Activated CD4-positive, alpha-beta memory T cell treated with anti-CD3 and anti-CD28 coated beads, Interleukin-2, amount 10 ng/mL, durations not matched to agents 7 days and 5 days (primary cell): ENCODE measurements at regions of chr6 and their contacts with region 1.

Region 1: GRCh38 chr6:31665501-31666336 is at the start of gene CSNK2B:
- DNase-seq: peak; percentile 99
- H3K4me3 Mint-ChIP-seq: peak within 1 kb of the TSS; percentile 86
- H3K27ac Mint-ChIP-seq: peak within 1 kb of the TSS; percentile 89
- H3K4me1 Mint-ChIP-seq: peaks cover 74% of the 10 kb centered on the region
- H3K27me3 Mint-ChIP-seq: no peaks in the 10 kb centered on the region
- total RNA-seq, gene CSNK2B: 199 to 212 TPM

Region 2: GRCh38 chr6:31399589-31400466 is 265.9 kb before region 1 on chr6:
- CTCF ChIA-PET with region 1: interaction called, 10 read pairs
- POLR2A ChIA-PET with region 1: no interaction called
- DNase-seq: peak; percentile 68
- H3K4me3 Mint-ChIP-seq: peak overlapping the region; percentile 87
- H3K27ac Mint-ChIP-seq: peak overlapping the region; percentile 87
- H3K4me1 Mint-ChIP-seq: peaks cover 52% of the 10 kb centered on the region
- H3K27me3 Mint-ChIP-seq: peaks cover 2% of the 10 kb centered on the region

Region 3: DNA sequence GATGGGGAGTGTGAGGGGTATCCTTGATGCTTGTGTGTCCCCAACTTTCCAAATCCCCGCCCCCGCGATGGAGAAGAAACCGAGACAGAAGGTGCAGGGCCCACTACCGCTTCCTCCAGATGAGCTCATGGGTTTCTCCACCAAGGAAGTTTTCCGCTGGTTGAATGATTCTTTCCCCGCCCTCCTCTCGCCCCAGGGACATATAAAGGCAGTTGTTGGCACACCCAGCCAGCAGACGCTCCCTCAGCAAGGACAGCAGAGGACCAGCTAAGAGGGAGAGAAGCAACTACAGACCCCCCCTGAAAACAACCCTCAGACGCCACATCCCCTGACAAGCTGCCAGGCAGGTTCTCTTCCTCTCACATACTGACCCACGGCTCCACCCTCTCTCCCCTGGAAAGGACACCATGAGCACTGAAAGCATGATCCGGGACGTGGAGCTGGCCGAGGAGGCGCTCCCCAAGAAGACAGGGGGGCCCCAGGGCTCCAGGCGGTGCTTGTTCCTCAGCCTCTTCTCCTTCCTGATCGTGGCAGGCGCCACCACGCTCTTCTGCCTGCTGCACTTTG is 90.3 kb before region 1 on chr6 and contains the start of gene TNF:
- CTCF ChIA-PET with region 1: interaction called, 4 read pairs
- POLR2A ChIA-PET with region 1: interaction called, 15 read pairs
- DNase-seq: peak; percentile 91
- H3K4me3 Mint-ChIP-seq: peak within 1 kb of the TSS; percentile 94
- H3K27ac Mint-ChIP-seq: peak within 1 kb of the TSS; percentile 96
- H3K4me1 Mint-ChIP-seq: peaks cover 73% of the 10 kb centered on the region
- H3K27me3 Mint-ChIP-seq: peaks cover 2% of the 10 kb centered on the region
- total RNA-seq, gene TNF: 124 to 130 TPM

Region 4: DNA sequence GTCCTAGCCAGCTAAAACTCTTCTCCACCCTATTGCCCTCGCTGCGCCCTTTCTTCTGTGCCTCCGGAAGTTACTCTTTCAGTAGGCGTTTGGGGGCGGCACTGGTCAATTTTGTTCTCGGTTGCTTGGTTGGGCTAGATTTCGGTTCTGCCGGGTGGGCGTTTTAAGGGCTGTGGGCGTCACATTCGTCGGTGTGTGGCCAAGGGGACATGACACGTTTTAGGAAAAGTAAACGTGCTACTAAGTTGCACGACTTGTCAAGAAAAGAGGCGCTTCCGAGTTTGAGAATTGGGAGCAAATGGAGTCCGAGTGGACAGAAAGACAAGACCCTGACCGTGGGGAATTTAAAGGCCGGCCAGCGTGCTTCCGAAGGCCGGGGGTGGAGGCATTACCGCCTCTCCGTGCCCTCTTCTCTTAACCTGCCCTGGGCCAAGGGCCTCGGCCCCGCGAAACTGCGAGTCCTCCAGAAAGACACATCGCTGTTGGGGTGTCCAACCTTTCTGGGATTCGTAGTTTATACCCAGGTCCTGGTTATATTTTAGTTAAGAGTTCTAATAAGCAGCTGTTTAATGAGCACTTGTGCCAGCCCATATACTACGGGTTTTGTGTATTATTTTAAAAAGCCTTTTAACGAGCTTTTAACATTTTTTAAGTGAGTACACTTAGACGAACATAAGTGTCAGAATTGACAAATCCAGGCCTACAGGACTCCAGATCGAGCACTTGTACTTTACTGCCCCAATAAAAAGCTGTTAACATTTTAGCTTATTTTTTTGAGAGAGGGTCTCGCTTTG is 12.6 kb before region 1 on chr6:
- CTCF ChIA-PET with region 1: interaction called, 19 read pairs
- POLR2A ChIA-PET with region 1: interaction called, 278 read pairs
- DNase-seq: no peak
- H3K4me3 Mint-ChIP-seq: peak overlapping the region; percentile 97
- H3K27ac Mint-ChIP-seq: peak overlapping the region; percentile 98
- H3K4me1 Mint-ChIP-seq: peaks cover 66% of the 10 kb centered on the region
- H3K27me3 Mint-ChIP-seq: no peaks in the 10 kb centered on the region

Region 5: GRCh38 chr6:31806465-31807272 is 140.9 kb after region 1 on chr6 and contains the start of gene LSM2:
- CTCF ChIA-PET with region 1: no interaction called
- POLR2A ChIA-PET with region 1: interaction called, 14 read pairs
- DNase-seq: peak; percentile 98
- H3K4me3 Mint-ChIP-seq: peak within 1 kb of the TSS; percentile 91
- H3K27ac Mint-ChIP-seq: peak within 1 kb of the TSS; percentile 91
- H3K4me1 Mint-ChIP-seq: peaks cover 43% of the 10 kb centered on the region
- H3K27me3 Mint-ChIP-seq: no peaks in the 10 kb centered on the region
- total RNA-seq, gene LSM2: 100 to 108 TPM

Region 6: DNA sequence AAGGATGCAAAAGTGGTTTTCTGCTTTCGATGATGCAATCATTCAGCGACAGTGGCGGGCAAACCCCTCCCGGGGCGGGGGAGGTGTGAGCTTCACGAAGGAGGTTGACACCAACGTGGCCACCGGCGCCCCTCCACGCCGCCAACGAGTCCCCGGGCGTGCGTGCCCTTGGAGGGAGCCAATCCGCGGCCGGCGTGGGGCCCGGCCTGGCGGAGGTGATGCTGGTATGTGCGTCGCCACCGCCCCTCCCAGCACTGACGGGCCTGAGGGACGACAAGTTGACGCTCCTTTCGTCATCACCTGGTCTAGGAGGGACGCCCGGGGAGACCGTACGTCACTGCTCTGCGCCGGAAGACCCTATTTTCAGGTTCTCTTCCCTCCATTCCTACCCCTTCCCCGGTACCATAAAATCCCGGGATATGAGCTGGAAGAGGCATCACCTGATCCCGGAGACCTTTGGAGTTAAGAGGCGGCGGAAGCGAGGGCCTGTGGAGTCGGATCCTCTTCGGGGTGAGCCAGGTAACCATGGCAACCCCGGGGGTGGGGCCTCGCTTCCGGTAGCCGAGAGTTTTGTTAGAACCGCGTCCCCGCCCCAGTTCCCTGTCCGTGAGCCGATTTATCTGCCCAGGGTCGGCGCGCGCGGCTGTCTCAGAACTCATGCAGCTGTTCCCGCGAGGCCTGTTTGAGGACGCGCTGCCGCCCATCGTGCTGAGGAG is 306.4 kb after region 1 on chr6 and contains the start of gene DXO:
- CTCF ChIA-PET with region 1: no interaction called
- POLR2A ChIA-PET with region 1: interaction called, 10 read pairs
- DNase-seq: peak; percentile 98
- H3K4me3 Mint-ChIP-seq: peak within 1 kb of the TSS; percentile 97
- H3K27ac Mint-ChIP-seq: peak within 1 kb of the TSS; percentile 99
- H3K4me1 Mint-ChIP-seq: peaks cover 45% of the 10 kb centered on the region
- H3K27me3 Mint-ChIP-seq: no peaks in the 10 kb centered on the region
- total RNA-seq, gene DXO: 16.7 to 17.5 TPM